ENCODE measurements at regions of chr20 and their contacts with region 1.

Region 1: GRCh38 chr20:59299944-59300331 is 473 bp upstream of the EDN3 start:
- DNase-seq: no peak
- ATAC-seq: no peak
- H3K4me3 ChIP-seq: no peak overlapping the region
- H3K27ac ChIP-seq: no peak overlapping the region
- H3K4me1 ChIP-seq: no peaks in the 10 kb centered on the region
- H3K27me3 ChIP-seq: peaks cover 9 to 29% (median 23%) of the 10 kb centered on the region in 3 donors
- CTCF ChIP-seq: no peak
- POLR2A ChIP-seq: no peak

Region 2: GRCh38 chr20:59334651-59335300 is 34.8 kb after region 1 on chr20:
- in situ Hi-C with region 1: no loop called
- intact Hi-C with region 1: no loop called
- DNase-seq: no peak
- ATAC-seq: peak in 1 of 2 donors; percentile 50
- H3K4me3 ChIP-seq: no peak overlapping the region
- H3K27ac ChIP-seq: no peak overlapping the region
- H3K4me1 ChIP-seq: no peaks in the 10 kb centered on the region
- H3K27me3 ChIP-seq: no peaks in the 10 kb centered on the region
- CTCF ChIP-seq: no peak
- POLR2A ChIP-seq: no peak

Region 3: DNA sequence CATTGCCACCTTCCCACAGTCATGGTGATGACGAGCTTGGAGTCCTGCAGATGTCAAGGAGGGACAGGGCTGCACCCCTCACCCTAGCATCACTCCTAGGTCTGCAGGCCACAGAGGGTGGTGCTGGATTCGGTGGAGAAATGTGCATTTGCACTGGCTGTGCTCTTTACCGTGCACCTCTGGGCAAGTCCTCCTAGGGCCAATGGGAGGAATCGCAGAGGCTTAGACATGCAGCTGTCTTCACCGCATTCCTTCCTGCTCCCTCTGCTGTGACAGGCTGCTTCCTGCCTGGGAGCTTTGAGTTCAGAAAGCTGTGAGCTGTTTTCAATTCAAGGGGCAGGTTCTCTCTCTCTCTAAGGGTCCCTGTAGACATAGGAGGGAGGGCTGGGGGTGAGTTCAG is 85.5 kb after region 1 on chr20:
- in situ Hi-C with region 1: loop called in 1 of 4 experiments (anchors 25 kb)
- intact Hi-C with region 1: no loop called
- DNase-seq: no peak
- ATAC-seq: no peak
- H3K4me3 ChIP-seq: no peak overlapping the region
- H3K27ac ChIP-seq: no peak overlapping the region
- H3K4me1 ChIP-seq: no peaks in the 10 kb centered on the region
- H3K27me3 ChIP-seq: peaks cover 3 to 26% (median 23%) of the 10 kb centered on the region in 3 donors
- CTCF ChIP-seq: no peak
- POLR2A ChIP-seq: no peak

Region 4: GRCh38 chr20:59782986-59783640 is 483.2 kb after region 1 on chr20:
- in situ Hi-C with region 1: no loop called
- intact Hi-C with region 1: no loop called
- DNase-seq: no peak
- ATAC-seq: no peak
- H3K4me3 ChIP-seq: no peak overlapping the region
- H3K27ac ChIP-seq: no peak overlapping the region
- H3K4me1 ChIP-seq: no peaks in the 10 kb centered on the region
- H3K27me3 ChIP-seq: no peaks in the 10 kb centered on the region
- CTCF ChIP-seq: peak; percentile 29 to 79 (median 60)
- POLR2A ChIP-seq: no peak

Measured in gastrocnemius medialis (tissue), 4 donors.